ENCODE measurements at regions of chr2 and their contacts with region 1.

Region 1: GRCh38 chr2:44061876-44062275 is 66.1 kb upstream of the LRPPRC start:
- DNase-seq: no peak
- H3K4me3 ChIP-seq: no peak overlapping the region
- H3K27ac ChIP-seq: no peak overlapping the region
- H3K4me1 ChIP-seq: no peaks in the 10 kb centered on the region
- H3K27me3 ChIP-seq: no peaks in the 10 kb centered on the region; a peak in 2 of 7 replicates
- CTCF ChIP-seq: no peak
- EP300 ChIP-seq: no peak
- POLR2A ChIP-seq: no peak
- RAD21 ChIP-seq: no peak

Region 2: DNA sequence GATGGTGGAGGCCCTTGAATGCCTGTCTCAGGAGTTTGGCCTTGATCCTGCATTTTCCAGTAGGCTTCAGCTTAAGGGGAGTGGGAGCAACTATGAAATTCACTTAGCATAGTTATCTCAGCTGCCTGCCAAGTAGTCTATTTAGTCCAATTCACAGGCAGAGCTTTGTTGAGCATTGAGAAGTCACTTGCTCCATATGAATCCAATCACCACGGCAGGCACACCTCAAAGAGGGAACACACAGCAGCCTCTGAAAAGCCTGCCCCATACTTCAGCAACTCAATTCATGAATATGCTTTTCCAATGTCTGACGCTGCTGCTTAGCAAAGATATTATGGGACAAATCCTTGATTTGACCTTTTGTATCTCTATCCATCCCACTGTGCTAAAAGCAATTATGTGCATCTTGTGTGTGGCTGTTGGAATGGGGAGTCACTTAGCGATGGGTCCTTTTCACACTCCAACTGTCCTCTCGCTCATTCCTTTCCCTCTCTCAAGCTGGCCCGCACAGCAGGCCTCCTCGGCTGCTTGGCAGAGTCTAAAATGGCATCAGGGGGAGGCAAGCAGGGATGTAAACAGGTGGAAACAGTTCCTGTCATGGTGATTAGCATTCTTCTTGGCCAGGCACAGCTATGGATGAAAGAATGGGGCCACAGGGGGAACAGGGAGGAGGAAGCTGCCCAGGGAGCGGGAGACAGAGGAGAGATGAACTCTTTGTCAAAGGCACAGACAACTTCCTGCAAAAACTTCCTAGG is 10.1 kb before region 1 on chr2:
- CTCF ChIA-PET with region 1: interaction called, 21 read pairs
- POLR2A ChIA-PET with region 1: interaction called, 3 read pairs
- DNase-seq: no peak
- H3K4me3 ChIP-seq: no peak overlapping the region; a peak in 1 of 8 replicates
- H3K27ac ChIP-seq: no peak overlapping the region
- H3K4me1 ChIP-seq: peaks cover 3 to 14% (median 8%) of the 10 kb centered on the region in 4 experiments; a peak in 5 of 7 replicates
- H3K27me3 ChIP-seq: no peaks in the 10 kb centered on the region; a peak in 1 of 7 replicates
- CTCF ChIP-seq: no peak
- EP300 ChIP-seq: peak in 1 of 2 experiments; percentile 41; a peak in 1 of 3 replicates
- POLR2A ChIP-seq: no peak
- RAD21 ChIP-seq: no peak